AG04450 (cell line): ENCODE measurements at regions of chr1 and their contacts with region 1.

Region 1: DNA sequence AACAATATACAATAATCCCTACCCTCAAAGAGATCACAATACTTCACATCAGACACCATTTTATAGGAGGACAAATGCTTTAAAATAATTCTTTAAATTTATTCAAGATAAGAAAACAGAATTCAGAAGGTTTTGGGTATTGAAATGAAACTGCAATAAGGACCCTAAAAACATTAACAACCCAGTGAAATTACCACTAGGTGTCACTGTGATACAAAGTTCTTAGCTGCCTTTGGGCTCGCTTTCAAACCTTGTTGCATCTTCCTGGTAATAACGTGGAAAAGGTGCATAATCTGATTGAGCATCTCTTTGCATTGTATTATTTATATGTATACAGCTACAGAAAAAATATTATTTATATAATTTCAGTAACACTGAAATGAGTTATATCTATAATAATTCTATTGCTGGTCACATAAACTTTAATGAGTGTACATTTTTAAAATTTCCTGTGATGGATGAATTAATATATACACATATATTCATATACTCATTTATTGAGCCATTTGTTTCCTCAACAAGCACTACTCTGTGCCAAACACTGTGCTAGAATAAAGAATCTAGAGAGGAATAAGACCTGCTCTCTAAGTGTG is 185.2 kb downstream of the FAF1 start:
- DNase-seq: peak; percentile 39
- H3K4me3 ChIP-seq: no peak overlapping the region
- H3K27ac ChIP-seq: no peak overlapping the region
- H3K27me3 ChIP-seq: no peaks in the 10 kb centered on the region
- CTCF ChIP-seq: peak; percentile 71

Region 2: GRCh38 chr1:50750021-50750619 is 24.7 kb before region 1 on chr1:
- CTCF ChIA-PET with region 1: interaction called, 12 read pairs
- POLR2A ChIA-PET with region 1: no interaction called
- DNase-seq: no peak
- H3K4me3 ChIP-seq: no peak overlapping the region
- H3K27ac ChIP-seq: no peak overlapping the region
- H3K27me3 ChIP-seq: no peaks in the 10 kb centered on the region
- CTCF ChIP-seq: peak; percentile 62

Region 3: DNA sequence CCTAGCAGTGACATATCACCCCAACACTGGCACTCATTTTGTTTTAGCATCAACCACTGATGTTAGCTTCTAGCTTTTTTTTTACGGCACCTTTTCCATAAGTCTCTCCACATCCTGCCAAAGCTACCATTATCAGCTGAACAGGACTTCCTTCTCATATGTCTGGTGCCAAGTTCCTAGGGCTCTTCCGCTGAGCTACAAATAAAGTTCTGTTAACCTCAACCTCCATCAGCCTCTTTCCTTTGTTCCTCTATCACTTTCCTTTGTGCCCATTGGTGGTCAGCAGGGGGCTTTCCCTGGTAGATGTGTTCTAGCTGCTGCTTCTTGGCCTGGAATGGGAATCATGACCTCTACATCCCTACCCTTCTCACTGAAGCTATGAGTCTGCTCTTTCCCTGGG is 21.4 kb after region 1 on chr1:
- CTCF ChIA-PET with region 1: interaction called, 45 read pairs
- POLR2A ChIA-PET with region 1: no interaction called
- DNase-seq: no peak
- H3K4me3 ChIP-seq: no peak overlapping the region
- H3K27ac ChIP-seq: no peak overlapping the region
- H3K27me3 ChIP-seq: no peaks in the 10 kb centered on the region
- CTCF ChIP-seq: no peak

Region 4: DNA sequence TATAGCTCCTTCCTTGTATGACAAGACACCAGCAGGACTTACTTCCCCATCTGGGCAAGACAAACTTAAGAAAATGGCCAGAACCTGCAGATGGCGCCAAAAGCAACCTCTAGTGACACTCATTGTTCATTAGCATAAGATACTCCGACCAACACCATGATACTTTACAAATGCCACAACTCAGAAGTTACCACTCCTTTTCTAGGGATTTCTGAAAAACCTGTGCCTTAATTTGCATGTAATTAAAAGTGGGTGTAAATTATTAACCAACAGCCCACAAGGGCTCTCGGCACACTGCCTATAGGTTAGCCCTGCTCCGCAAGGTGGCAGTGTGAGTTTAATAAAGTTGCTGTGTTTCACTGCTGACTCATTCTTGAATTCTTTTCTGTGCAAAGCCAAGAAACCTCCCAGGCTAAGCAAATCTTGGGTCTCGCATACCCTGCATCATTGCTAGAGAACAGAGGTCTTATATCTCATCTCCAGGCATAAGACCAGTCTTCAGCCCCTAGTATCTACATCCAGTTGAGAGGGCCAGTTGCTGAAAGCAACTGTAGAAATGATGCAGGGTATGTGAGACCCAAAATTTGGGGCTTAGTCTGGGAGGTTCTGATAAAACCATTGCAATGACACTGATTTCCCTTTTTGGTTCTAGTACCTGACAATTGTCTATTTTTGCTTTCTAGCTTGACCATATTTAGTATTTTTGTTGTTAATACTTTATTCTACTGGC is 98.8 kb after region 1 on chr1:
- CTCF ChIA-PET with region 1: interaction called, 23 read pairs
- POLR2A ChIA-PET with region 1: no interaction called
- DNase-seq: peak; percentile 18
- H3K4me3 ChIP-seq: peak overlapping the region; percentile 14; the same call in 1 of the 2 replicates
- H3K27ac ChIP-seq: no peak overlapping the region
- H3K27me3 ChIP-seq: no peaks in the 10 kb centered on the region
- CTCF ChIP-seq: peak; percentile 71

Region 5: DNA sequence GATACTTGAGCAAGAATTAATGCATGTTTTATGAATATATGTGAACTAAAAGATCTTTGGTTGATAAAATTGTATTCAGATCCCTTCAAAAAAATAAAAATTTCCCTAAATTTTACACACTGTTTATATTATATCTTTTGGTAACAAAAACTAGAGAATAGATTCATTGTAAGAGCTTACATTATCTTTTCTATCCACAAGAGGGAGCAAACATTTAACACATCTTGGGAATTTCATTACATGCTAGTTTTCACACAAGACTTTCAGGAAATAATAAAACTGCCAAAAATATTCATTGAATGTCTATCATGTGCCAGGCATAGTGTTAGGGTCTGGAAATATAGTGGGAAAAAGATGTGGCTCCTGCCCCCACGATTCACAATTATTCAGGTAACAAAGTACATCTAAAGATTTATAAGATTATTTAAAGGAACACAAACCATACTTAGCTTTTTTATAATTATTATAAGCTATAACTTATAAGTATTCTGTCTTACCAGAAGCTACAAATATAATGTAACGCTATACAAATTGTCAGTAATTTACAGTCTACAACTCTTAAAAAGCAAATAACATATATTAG is 154.6 kb after region 1 on chr1:
- CTCF ChIA-PET with region 1: interaction called, 50 read pairs
- POLR2A ChIA-PET with region 1: no interaction called
- DNase-seq: peak; percentile 6
- H3K4me3 ChIP-seq: no peak overlapping the region
- H3K27ac ChIP-seq: no peak overlapping the region
- H3K27me3 ChIP-seq: no peaks in the 10 kb centered on the region
- CTCF ChIP-seq: peak; percentile 56

Region 6: GRCh38 chr1:51296383-51297357 is 521.8 kb after region 1 on chr1:
- CTCF ChIA-PET with region 1: interaction called, 13 read pairs
- POLR2A ChIA-PET with region 1: no interaction called
- DNase-seq: peak; percentile 32
- H3K4me3 ChIP-seq: no peak overlapping the region
- H3K27ac ChIP-seq: no peak overlapping the region
- H3K27me3 ChIP-seq: no peaks in the 10 kb centered on the region
- CTCF ChIP-seq: peak; percentile 97